ENCODE measurements at regions of chr2 and their contacts with region 1.

Region 1: DNA sequence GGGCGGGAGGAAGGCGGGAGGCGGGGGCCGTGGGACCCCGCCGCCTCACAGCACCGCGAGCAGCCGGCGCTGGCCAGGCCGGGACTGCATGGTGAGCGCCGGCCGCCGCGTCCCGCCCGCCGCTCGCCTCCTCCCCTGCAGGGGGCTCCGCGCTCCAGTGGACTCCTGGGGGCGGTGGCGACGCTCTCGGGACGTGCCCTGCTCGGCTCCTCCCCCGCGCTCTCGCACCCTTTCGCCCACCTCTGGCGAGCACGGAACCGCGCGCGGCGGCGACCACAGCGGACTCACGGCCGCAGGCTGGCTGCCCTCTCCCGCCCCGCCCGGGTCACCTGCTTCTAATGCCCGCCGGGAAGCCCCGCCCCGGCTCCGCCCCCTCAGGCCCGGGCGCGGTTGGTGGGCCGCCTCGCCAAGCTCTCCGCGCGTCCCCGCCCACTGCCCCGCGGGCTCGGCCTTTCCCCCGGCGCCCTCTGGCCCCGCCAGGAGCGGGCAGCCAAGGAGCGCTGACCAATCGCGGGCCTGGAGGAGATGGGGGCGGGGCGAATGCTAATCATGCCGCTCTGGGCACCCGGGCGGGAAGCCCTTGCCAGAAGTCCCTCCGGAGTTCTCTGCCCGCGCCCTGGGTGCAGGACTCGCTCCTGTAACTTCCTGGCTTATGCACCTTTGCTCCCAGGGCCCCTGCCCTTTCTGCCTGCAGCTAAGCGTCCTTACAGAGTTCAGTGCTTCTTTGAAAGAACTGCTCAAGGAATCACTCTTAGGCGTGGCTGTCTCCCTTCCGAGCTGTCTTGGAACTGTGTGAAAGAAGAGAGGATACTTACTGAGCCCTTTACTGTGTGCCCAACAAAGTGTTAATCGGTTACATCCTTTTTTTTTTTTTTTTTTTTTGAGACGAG is at the start of gene FZD5:
- DNase-seq: peak; percentile 52
- ATAC-seq: peak; percentile 91
- H3K4me3 ChIP-seq: peak within 1 kb of the TSS; percentile 77
- H3K27ac ChIP-seq: no peak within 1 kb of the TSS; the same call in 1 of the 2 replicates
- H3K4me1 ChIP-seq: peaks cover 7% of the 10 kb centered on the region; the same call in 1 of the 2 replicates
- H3K27me3 ChIP-seq: peaks cover 1% of the 10 kb centered on the region; the same call in 1 of the 2 replicates
- CTCF ChIP-seq: peak; percentile 56
- POLR2A ChIP-seq: no peak
- RAD21 ChIP-seq: peak; percentile 53
- total RNA-seq, gene FZD5: under 0.01 TPM in 2 replicates

Region 2: GRCh38 chr2:207758025-207758424 is 11.8 kb before region 1 on chr2:
- CTCF ChIA-PET with region 1: interaction called, 3 read pairs
- POLR2A ChIA-PET with region 1: interaction called, 13 read pairs
- dilution Hi-C with region 1: no loop called
- in situ Hi-C with region 1: no loop called
- intact Hi-C with region 1: no loop called
- DNase-seq: no peak
- ATAC-seq: no peak
- H3K4me3 ChIP-seq: no peak overlapping the region
- H3K27ac ChIP-seq: no peak overlapping the region
- H3K4me1 ChIP-seq: no peaks in the 10 kb centered on the region
- H3K27me3 ChIP-seq: no peaks in the 10 kb centered on the region
- CTCF ChIP-seq: no peak
- POLR2A ChIP-seq: no peak
- RAD21 ChIP-seq: no peak

Region 3: DNA sequence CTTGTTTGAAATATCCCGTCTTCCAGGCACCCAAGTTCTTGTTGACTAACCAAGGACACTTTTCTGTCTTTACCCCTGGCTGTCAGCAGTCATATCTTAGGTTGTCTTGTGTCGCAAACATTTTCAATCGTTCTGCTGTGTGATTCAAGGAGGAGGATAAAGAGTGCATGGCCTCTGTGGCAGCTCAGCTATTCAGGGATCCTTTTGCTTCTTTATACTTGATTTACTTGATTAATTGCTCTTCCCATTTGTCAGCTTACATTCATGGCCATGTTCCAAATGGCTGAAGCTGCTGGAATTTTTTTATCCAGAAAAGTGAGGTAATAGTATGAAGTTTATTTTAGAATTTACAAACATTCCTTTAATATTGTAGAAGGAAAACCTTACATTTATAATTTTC is 97.2 kb after region 1 on chr2:
- CTCF ChIA-PET with region 1: no interaction called
- POLR2A ChIA-PET with region 1: no interaction called
- dilution Hi-C with region 1: no loop called
- in situ Hi-C with region 1: no loop called
- intact Hi-C with region 1: no loop called
- DNase-seq: peak; percentile 19
- ATAC-seq: no peak
- H3K4me3 ChIP-seq: no peak overlapping the region
- H3K27ac ChIP-seq: no peak overlapping the region
- H3K4me1 ChIP-seq: peaks cover 4% of the 10 kb centered on the region; the same call in 1 of the 2 replicates
- H3K27me3 ChIP-seq: no peaks in the 10 kb centered on the region
- CTCF ChIP-seq: no peak
- POLR2A ChIP-seq: no peak
- RAD21 ChIP-seq: no peak

Region 4: DNA sequence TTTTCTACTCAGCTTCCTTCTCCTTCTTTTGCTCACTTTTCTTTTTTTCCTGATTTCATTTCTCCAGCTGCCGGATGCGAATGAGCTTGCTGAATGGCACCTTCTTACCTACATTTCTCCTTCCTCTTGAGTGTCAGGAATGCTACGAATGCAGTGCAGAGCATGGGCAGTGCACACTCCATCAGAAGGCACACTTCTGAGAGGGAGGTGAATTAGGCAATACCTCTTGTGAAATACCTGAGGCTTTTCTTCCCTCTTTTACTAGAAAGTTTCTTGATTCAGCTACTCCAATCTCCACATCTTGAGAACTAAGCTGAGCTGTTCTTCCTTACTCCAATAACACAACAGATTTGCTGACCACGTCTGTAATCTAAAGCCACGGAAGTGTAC is 204.4 kb after region 1 on chr2:
- CTCF ChIA-PET with region 1: interaction called, 3 read pairs
- POLR2A ChIA-PET with region 1: no interaction called
- dilution Hi-C with region 1: no loop called
- in situ Hi-C with region 1: no loop called
- intact Hi-C with region 1: loop called (anchors 1 kb)
- DNase-seq: no peak
- ATAC-seq: no peak
- H3K4me3 ChIP-seq: no peak overlapping the region
- H3K27ac ChIP-seq: no peak overlapping the region
- H3K4me1 ChIP-seq: no peaks in the 10 kb centered on the region
- H3K27me3 ChIP-seq: no peaks in the 10 kb centered on the region
- CTCF ChIP-seq: no peak
- POLR2A ChIP-seq: no peak
- RAD21 ChIP-seq: no peak

Region 5: GRCh38 chr2:208040199-208041171 is 270.6 kb after region 1 on chr2:
- CTCF ChIA-PET with region 1: interaction called, 4 read pairs
- POLR2A ChIA-PET with region 1: no interaction called
- dilution Hi-C with region 1: no loop called
- in situ Hi-C with region 1: no loop called
- intact Hi-C with region 1: loop called (anchors 1 kb)
- DNase-seq: peak; percentile 82
- ATAC-seq: peak; percentile 81
- H3K4me3 ChIP-seq: no peak overlapping the region
- H3K27ac ChIP-seq: no peak overlapping the region
- H3K4me1 ChIP-seq: peaks cover 7% of the 10 kb centered on the region
- H3K27me3 ChIP-seq: no peaks in the 10 kb centered on the region
- CTCF ChIP-seq: peak; percentile 81
- POLR2A ChIP-seq: no peak
- RAD21 ChIP-seq: peak; percentile 70

Region 6: DNA sequence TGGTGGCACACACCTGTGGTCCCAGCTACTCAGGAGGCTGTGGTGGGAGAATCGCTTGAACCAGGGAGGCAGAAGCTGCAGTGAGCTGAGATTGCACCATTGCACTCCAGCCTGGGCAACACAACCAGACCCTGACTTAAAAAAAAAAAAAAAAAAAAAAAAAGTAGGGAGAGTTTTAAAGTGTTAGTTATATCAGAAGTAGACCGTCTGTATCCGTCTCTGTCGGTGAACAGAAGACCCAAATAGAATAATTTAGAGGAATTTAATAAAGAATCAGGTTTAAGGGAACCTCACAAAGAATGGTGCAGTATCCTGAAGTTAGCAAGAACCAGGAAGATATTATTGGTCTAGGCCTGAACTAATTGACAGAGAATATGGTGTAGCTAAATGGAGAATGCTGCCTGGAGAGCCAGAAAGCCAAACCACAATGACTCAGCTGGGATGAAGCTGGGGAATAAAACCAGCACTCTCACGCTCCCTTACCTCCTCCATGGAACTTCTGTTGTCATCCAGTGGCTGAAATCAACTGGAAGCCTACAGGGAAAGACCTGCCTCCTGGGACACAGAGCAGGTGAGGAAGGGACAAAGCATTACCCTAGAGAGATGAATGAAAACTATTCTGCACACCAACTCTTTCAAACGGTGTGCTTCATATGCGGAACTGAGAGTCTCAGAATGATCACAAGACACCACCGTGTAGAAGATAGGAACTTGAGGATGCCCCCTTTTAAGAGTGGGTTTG is 294.5 kb after region 1 on chr2:
- CTCF ChIA-PET with region 1: interaction called, 4 read pairs
- POLR2A ChIA-PET with region 1: no interaction called
- dilution Hi-C with region 1: no loop called
- in situ Hi-C with region 1: no loop called
- intact Hi-C with region 1: loop called (anchors 2 kb)
- DNase-seq: peak; percentile 94
- ATAC-seq: peak; percentile 93
- H3K4me3 ChIP-seq: no peak overlapping the region
- H3K27ac ChIP-seq: peak overlapping the region; percentile 26; the same call in 1 of the 2 replicates
- H3K4me1 ChIP-seq: peaks cover 3% of the 10 kb centered on the region; the same call in 1 of the 2 replicates
- H3K27me3 ChIP-seq: no peaks in the 10 kb centered on the region; the same call in 1 of the 2 replicates
- CTCF ChIP-seq: no peak
- POLR2A ChIP-seq: no peak
- RAD21 ChIP-seq: no peak

Measured in IMR-90 (cell line).